Spleen (tissue), 13 donors: ENCODE measurements at regions of chr5 and their contacts with region 1.

Region 1: GRCh38 chr5:59799668-59800346 is 93.7 kb downstream of the PDE4D start:
- DNase-seq: no peak
- H3K4me3 ChIP-seq: peak overlapping the region in 2 of 8 donors; percentile 10 to 35
- H3K27ac ChIP-seq: peak overlapping the region in 5 of 8 donors; percentile 38 to 59 (median 54)
- H3K4me1 ChIP-seq: peaks cover 13 to 35% (median 20%) of the 10 kb centered on the region in 6 donors
- H3K27me3 ChIP-seq: no peaks in the 10 kb centered on the region
- CTCF ChIP-seq: peak; percentile 60 to 89 (median 85)
- POLR2A ChIP-seq: no peak

Region 2: GRCh38 chr5:59193616-59194319 is 606.0 kb before region 1 on chr5:
- intact Hi-C with region 1: loop called (anchors 5 kb)
- DNase-seq: no peak
- H3K4me3 ChIP-seq: no peak overlapping the region
- H3K27ac ChIP-seq: no peak overlapping the region
- H3K4me1 ChIP-seq: peaks cover 0 to 2% (median 2%) of the 10 kb centered on the region in 6 donors
- H3K27me3 ChIP-seq: no peaks in the 10 kb centered on the region
- CTCF ChIP-seq: no peak
- POLR2A ChIP-seq: no peak

Region 3: GRCh38 chr5:59390074-59390659 is 409.6 kb before region 1 on chr5:
- intact Hi-C with region 1: loop called (anchors 5 kb)
- DNase-seq: no peak
- H3K4me3 ChIP-seq: no peak overlapping the region
- H3K27ac ChIP-seq: no peak overlapping the region
- H3K4me1 ChIP-seq: no peaks in the 10 kb centered on the region
- H3K27me3 ChIP-seq: no peaks in the 10 kb centered on the region
- CTCF ChIP-seq: peak in 10 of 11 experiments; percentile 13 to 70 (median 51)
- POLR2A ChIP-seq: no peak

Region 4: GRCh38 chr5:59738024-59738423 is 61.8 kb before region 1 on chr5:
- intact Hi-C with region 1: no loop called
- DNase-seq: no peak
- H3K4me3 ChIP-seq: no peak overlapping the region
- H3K27ac ChIP-seq: no peak overlapping the region
- H3K4me1 ChIP-seq: no peaks in the 10 kb centered on the region
- H3K27me3 ChIP-seq: no peaks in the 10 kb centered on the region
- CTCF ChIP-seq: no peak
- POLR2A ChIP-seq: no peak

Region 5: DNA sequence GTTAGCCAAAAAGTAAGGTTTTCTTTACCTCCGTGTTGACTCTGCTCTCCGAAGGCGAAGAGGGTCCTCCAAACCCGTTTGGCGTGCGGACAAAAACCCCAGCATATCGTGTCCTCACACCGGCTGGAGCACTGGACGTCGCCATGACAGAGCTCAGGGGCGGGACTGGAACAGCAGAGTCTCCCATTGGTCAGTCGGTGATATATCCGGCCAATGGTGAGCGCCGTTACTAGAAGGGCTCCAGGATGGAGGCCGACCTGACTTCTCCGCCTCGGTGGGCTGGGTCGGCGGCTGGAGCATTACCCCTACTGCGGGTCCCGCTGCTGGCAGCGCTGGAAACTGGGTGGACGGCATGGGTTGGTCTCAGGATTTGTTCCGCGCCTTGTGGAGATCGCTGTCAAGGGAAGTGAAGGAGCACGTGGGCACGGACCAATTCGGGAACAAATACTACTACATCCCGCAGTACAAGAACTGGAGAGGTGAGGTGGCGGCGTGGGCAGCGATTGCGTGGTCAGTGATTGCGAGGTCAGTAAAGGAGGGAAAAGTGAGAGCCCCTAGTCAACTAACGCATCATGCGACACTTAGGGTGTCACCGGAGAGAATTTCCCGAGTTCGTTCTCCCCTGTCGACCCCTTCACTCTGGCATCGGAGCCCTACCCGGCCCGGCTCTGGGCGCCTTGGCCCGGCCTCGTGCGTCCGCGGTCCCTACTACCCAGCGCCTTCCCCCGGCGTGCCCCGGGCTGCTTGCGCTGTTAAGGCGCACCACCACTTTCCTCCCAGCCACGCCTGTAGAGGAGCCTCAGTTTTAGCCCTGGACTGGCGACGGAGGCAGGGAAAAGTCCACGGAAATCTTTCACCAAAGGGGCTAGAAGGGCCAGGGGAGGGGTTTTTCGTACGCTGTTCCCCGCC is 1145.4 kb after region 1 on chr5 and contains the starts of genes ERCC8 and NDUFAF2:
- intact Hi-C with region 1: loop called (anchors 10 kb)
- DNase-seq: peak; percentile 95
- H3K4me3 ChIP-seq: peak within 1 kb of the TSS; percentile 76 to 93 (median 85)
- H3K27ac ChIP-seq: peak within 1 kb of the TSS; percentile 65 to 85 (median 82)
- H3K4me1 ChIP-seq: peaks cover 16 to 62% (median 37%) of the 10 kb centered on the region in 6 donors
- H3K27me3 ChIP-seq: no peaks in the 10 kb centered on the region
- CTCF ChIP-seq: peak in 1 of 11 experiments; percentile 8
- POLR2A ChIP-seq: no peak
- total RNA-seq, gene ERCC8: 8.6 to 18.9 (median 13.4) TPM
- total RNA-seq, gene NDUFAF2: 3.2 to 14.4 (median 12.3) TPM